ENCODE measurements at regions of chr6 and their contacts with region 1.

Region 1: DNA sequence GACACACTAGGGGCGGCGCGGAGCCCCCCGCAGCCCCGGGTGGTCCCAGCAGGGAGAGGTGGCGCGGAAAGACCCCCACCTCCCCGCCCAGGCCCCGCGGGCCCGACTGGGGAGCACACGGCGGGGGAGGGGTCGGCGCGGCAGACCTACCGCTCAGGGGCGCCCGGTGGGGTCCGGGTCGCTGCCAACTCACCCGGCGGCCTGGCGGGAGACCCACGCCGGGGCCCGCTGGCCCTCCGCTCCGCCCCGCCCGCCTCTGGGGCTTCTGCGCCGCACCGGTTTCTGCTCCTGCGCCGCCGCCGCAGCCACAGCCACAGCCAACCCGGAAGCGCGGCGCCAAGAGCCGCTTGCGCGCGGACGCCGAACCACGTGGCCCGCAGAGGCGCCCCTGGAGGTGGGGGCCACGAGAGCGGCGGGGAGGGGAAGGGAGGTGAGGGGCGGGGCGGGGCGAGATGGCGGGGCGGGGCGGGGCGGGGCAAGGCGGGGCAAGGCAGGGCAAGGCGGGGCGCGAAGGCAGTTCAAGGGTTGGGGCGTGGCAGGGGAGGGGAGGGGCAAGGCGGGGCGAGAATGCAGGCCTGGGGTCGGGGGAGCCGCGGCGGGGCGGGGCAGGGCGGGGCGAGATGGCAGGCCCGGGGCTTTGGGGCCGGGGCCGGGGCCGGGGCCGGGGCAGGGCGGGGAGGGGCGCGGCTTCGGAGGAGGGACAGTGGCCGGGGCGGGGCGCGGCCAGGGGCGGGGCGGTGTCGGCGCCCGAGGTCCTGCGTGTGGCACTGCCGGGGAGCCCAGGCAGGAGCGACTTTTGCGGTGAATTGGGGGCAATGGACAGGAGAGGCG is at the start of gene ZBTB24:
- DNase-seq: peak; percentile 93
- H3K4me3 Mint-ChIP-seq: peak within 1 kb of the TSS; percentile 96
- H3K27ac Mint-ChIP-seq: peak within 1 kb of the TSS; percentile 90
- H3K4me1 Mint-ChIP-seq: peaks cover 48% of the 10 kb centered on the region
- H3K27me3 Mint-ChIP-seq: no peaks in the 10 kb centered on the region
- total RNA-seq, gene ZBTB24: 10.9 to 11.8 TPM

Region 2: DNA sequence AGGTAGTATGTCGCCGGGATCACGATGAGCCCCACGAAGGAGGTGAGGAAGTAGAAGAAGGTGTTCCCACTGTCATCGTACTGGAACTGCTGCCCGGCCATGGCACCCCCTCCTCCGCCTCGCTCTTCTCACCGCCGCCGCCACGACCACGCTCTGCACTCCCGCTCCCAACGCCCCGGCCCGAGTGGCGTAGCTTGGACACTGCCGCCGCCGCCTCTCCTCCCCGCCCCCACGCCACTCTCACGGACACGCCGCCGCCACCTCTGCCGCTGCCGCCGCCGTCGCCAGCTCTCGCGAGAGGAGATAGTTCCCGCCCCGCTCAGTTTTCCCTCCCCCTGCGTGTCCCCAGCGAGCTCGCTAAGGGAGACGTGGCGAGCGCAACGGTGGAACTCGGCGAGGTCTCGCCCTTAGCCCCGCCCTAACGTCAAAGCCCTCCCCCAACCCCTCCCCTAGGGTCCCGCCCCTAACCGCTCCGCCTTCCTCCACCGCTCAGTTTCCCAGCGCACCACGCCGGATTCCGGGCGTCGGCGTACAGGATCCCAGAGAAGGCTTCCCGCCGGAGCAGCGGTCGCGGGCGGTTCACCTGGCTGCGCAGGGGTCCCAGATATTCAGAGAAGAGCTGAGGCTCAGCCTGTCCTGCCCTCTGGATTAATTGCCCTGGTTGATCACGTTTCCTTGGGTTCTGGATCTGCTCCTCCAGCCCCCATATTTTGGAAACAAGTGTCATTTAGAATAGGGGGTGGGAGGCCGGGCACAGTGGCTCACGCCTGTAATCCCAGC is 1525.0 kb before region 1 on chr6 and contains the start of gene SEC63:
- CTCF ChIA-PET with region 1: no interaction called
- POLR2A ChIA-PET with region 1: no interaction called
- intact Hi-C with region 1: loop called (anchors 10 kb)
- DNase-seq: peak; percentile 99
- H3K4me3 Mint-ChIP-seq: peak within 1 kb of the TSS; percentile 100
- H3K27ac Mint-ChIP-seq: peak within 1 kb of the TSS; percentile 95
- H3K4me1 Mint-ChIP-seq: peaks cover 26% of the 10 kb centered on the region
- H3K27me3 Mint-ChIP-seq: no peaks in the 10 kb centered on the region
- total RNA-seq, gene SEC63: 90.6 to 95.9 TPM

Region 3: DNA sequence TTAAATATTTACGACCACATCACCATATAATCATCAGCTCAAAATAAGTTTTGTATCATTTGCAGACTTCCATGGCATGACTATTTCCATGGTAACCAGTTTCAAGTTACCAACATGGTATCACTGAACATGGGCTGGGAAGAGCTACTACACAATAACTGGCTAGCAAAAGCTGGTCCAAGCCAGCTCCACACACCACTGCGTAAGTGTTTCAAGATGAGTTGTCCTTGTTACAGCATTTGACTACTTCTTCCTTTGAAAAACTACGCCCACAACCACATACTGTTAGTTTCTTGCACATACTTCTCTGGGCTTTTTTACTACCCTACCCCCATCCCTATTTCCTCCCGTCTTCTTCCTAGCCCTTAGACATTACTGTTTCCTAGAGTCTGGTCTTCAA is 109.4 kb before region 1 on chr6:
- CTCF ChIA-PET with region 1: no interaction called
- POLR2A ChIA-PET with region 1: interaction called, 5 read pairs
- intact Hi-C with region 1: loop called (anchors 2 kb)
- DNase-seq: peak; percentile 80
- H3K4me3 Mint-ChIP-seq: peak overlapping the region; percentile 63
- H3K27ac Mint-ChIP-seq: peak overlapping the region; percentile 99
- H3K4me1 Mint-ChIP-seq: peaks cover 75% of the 10 kb centered on the region
- H3K27me3 Mint-ChIP-seq: no peaks in the 10 kb centered on the region

Region 4: GRCh38 chr6:109455502-109456282 is 27.4 kb before region 1 on chr6 and contains the start of gene MICAL1:
- CTCF ChIA-PET with region 1: interaction called, 4 read pairs
- POLR2A ChIA-PET with region 1: interaction called, 13 read pairs
- intact Hi-C with region 1: loop called (anchors 1 kb)
- DNase-seq: peak; percentile 78
- H3K4me3 Mint-ChIP-seq: peak within 1 kb of the TSS; percentile 93
- H3K27ac Mint-ChIP-seq: peak within 1 kb of the TSS; percentile 90
- H3K4me1 Mint-ChIP-seq: peaks cover 65% of the 10 kb centered on the region
- H3K27me3 Mint-ChIP-seq: no peaks in the 10 kb centered on the region
- total RNA-seq, gene MICAL1: 39.4 to 45.0 TPM

Region 5: DNA sequence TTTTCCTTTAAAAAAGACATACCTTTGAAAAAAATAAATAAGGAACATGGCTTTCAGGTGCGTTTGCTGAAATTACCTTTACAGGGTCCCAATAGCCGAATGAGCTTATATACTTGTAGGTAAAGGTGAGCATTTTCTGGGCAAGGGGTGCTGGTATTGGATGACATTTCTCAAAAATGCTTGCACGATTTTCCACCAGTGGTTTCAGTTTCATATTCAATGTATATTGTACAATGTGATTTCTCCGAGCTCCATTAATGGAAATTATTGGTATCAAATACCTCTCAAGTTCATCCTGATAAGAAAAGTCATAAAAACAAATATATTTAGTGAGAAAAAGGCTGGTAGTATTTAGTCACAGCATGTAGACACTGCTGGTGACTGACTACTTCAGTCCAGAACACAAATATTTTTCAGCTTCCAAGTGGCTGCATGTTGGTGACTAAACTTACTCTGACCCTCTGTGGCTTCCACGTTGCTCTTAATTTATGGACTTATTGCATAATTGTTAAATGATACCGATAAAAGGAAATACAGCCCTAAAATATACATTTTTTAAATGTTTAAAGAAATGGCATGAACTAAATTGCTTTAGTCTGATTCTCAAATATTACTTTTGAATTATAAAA is 32.8 kb after region 1 on chr6:
- CTCF ChIA-PET with region 1: no interaction called
- POLR2A ChIA-PET with region 1: no interaction called
- intact Hi-C with region 1: loop called (anchors 5 kb)
- DNase-seq: no peak
- H3K4me3 Mint-ChIP-seq: peak overlapping the region; percentile 16
- H3K27ac Mint-ChIP-seq: no peak overlapping the region
- H3K4me1 Mint-ChIP-seq: peaks cover 33% of the 10 kb centered on the region
- H3K27me3 Mint-ChIP-seq: no peaks in the 10 kb centered on the region

Region 6: GRCh38 chr6:110179401-110180227 is 696.5 kb after region 1 on chr6 and contains the start of gene WASF1:
- CTCF ChIA-PET with region 1: no interaction called
- POLR2A ChIA-PET with region 1: no interaction called
- intact Hi-C with region 1: loop called (anchors 1 kb)
- DNase-seq: peak; percentile 94
- H3K4me3 Mint-ChIP-seq: peak within 1 kb of the TSS; percentile 85
- H3K27ac Mint-ChIP-seq: no peak within 1 kb of the TSS
- H3K4me1 Mint-ChIP-seq: peaks cover 5% of the 10 kb centered on the region
- H3K27me3 Mint-ChIP-seq: peaks cover 10% of the 10 kb centered on the region
- total RNA-seq, gene WASF1: 1.9 to 2.6 TPM

Measured in activated CD4-positive, alpha-beta memory T cell treated with anti-CD3 and anti-CD28 coated beads for 36 hours (primary cell).